Sciatic nerve (tissue), 2 donors: ENCODE measurements at regions of chr7 and their contacts with region 1.

Region 1: GRCh38 chr7:123485187-123485586 is 49.2 kb downstream of the IQUB start:
- DNase-seq: no peak
- ATAC-seq: no peak

Region 2: GRCh38 chr7:123004931-123005330 is 480.3 kb before region 1 on chr7:
- intact Hi-C with region 1: no loop called
- DNase-seq: no peak
- ATAC-seq: no peak

Region 3: GRCh38 chr7:123538189-123538714 is 53.1 kb after region 1 on chr7:
- intact Hi-C with region 1: no loop called
- DNase-seq: no peak
- ATAC-seq: no peak

Region 4: GRCh38 chr7:123674399-123675180 is 189.4 kb after region 1 on chr7:
- intact Hi-C with region 1: loop called (anchors 10 kb)
- DNase-seq: no peak
- ATAC-seq: peak; percentile 79

Region 5: GRCh38 chr7:123792547-123792946 is 307.4 kb after region 1 on chr7:
- intact Hi-C with region 1: no loop called
- DNase-seq: no peak
- ATAC-seq: no peak